ENCODE measurements at regions of chr2 and their contacts with region 1.

Region 1: DNA sequence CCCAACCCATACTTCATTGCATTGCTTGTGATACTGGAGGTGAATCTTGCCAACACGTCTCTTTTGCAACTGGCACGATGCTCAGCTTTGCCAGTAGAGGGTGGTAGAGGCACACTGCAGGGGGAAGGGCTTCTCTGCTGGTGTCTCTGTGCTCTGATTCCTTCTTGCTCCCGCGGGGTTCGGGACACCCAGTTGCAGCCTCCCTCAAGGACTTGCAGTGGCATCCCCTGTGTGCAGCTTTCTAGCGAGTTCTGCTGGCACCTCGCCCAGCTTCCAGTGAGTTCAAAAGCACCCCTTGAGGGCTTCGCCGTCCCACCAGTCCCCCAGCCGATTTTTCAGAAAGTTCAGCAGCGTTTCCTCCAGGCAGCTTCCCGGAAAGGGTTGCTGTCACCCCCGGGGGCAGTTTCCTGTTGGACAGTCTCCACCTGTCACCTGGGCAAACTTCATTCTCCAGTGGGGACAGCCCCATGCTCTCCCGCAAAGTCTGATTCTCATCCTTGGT is 35.3 kb upstream of the EN1 start:
- DNase-seq: peak; percentile 80
- H3K4me3 ChIP-seq: peak overlapping the region; percentile 31
- H3K27ac ChIP-seq: no peak overlapping the region
- H3K4me1 ChIP-seq: no peaks in the 10 kb centered on the region
- H3K27me3 ChIP-seq: no peaks in the 10 kb centered on the region
- CTCF ChIP-seq: peak; percentile 92

Region 2: DNA sequence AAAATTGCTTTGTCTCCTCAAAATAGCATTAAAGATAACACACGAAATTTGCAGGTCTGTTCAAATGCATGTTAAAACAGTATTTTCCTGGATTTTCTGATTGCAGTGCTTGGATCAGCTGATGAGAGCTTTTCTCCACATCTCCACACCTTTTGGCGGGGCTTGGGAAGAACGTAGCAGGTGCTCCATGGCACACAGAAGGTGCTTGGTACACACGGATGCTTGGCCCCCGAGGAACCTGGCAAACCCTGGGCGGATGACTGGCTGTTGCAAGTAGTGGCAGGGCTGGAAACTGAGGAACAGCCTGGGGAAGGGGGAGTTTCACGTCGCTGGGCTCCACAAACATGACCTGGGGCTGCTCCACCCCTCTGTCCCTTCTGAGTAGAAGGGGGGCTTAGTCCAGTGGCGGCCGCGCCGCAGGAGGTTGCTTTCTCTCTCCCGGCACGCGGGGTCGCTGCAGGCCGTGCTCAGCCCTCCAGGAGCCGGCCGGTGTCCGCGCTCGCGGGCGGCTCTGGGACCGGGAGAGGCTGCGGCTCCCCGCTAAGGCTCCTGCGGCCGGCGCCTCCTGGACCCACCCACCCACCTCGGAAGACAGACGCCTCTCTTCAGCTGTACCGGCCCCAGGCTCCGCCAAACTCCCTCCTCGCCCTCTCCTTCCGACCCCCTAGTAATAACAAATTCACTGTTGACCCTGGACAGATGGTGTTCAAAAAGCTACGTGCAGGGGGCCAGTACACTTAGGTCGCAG is 128.6 kb after region 1 on chr2:
- intact Hi-C with region 1: loop called (anchors 2 kb)
- DNase-seq: no peak
- H3K4me3 ChIP-seq: no peak overlapping the region
- H3K27ac ChIP-seq: no peak overlapping the region
- H3K4me1 ChIP-seq: no peaks in the 10 kb centered on the region
- H3K27me3 ChIP-seq: peaks cover 9% of the 10 kb centered on the region
- CTCF ChIP-seq: no peak

Region 3: DNA sequence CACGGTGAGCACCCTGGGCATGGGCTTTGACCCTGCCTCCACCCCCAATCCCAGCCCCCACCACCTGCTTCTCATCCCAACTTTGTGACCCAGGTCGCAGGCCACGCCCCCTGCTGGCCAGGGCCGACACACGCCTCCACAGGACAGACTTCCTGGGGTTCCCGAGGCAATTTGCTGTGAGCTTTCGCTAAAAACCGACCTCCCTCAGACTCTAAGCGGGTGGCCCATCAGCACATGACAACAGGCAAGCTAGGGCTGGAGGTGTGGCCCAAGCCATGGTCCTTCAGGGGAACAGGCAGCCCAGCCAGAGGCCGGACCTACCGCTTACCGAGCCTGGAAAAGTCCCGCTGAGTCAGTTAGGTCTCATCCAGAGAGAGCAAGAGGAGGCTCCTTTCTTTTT is 243.9 kb after region 1 on chr2:
- intact Hi-C with region 1: loop called (anchors 5 kb)
- DNase-seq: peak; percentile 32
- H3K4me3 ChIP-seq: no peak overlapping the region
- H3K27ac ChIP-seq: no peak overlapping the region
- H3K4me1 ChIP-seq: no peaks in the 10 kb centered on the region
- H3K27me3 ChIP-seq: no peaks in the 10 kb centered on the region
- CTCF ChIP-seq: peak; percentile 55

Region 4: DNA sequence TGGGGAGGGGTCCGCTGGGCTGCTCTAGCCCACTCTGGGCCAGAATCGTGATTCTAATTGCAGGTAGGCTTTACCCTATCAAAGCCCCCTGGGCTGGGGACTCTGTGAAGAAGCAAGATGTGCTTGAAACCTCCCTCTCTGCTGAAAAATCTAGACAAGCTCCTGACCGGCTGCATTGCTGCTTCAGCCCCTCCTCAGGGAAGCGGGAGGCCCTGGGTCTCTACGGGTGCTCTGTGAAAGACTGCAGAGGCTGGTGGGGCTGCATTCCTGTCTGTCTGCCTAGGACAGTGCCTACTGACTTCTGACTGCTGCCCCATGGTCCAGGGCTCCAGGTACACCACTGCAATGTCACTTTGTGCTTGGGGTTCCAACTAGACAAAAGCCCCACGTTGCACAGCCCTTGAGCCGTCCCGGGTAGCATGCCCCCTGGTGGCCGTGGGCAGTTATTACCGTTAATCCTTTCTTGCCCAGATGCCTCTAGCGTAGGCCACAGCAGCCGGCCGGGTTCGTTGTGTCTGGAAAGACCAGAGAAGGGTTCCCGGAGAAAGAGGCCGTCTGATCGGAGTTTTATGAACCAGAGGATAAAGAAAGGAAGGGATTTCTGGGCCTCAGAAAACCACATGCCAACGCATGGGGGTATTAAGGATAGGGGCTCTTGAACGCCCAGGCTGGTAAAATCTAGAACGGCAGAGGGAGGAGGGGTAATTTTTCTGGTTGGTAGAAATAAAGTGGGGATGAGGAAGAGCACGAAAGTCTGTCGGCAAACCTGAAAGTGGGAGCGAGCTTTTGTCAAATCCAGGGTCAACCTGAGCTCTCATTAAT is 291.7 kb after region 1 on chr2:
- intact Hi-C with region 1: loop called (anchors 2 kb)
- DNase-seq: peak; percentile 51
- H3K4me3 ChIP-seq: no peak overlapping the region
- H3K27ac ChIP-seq: no peak overlapping the region
- H3K4me1 ChIP-seq: no peaks in the 10 kb centered on the region
- H3K27me3 ChIP-seq: no peaks in the 10 kb centered on the region
- CTCF ChIP-seq: peak; percentile 69

Region 5: GRCh38 chr2:119290859-119291587 is 408.3 kb after region 1 on chr2:
- intact Hi-C with region 1: loop called (anchors 5 kb)
- DNase-seq: peak; percentile 69
- H3K4me3 ChIP-seq: no peak overlapping the region
- H3K27ac ChIP-seq: no peak overlapping the region
- H3K4me1 ChIP-seq: no peaks in the 10 kb centered on the region
- H3K27me3 ChIP-seq: no peaks in the 10 kb centered on the region
- CTCF ChIP-seq: peak; percentile 73